Activated CD4-positive, alpha-beta T cell treated with anti-CD3 and anti-CD28 coated beads for 36 hours (primary cell): ENCODE measurements at regions of chr4 and their contacts with region 1.

Region 1: DNA sequence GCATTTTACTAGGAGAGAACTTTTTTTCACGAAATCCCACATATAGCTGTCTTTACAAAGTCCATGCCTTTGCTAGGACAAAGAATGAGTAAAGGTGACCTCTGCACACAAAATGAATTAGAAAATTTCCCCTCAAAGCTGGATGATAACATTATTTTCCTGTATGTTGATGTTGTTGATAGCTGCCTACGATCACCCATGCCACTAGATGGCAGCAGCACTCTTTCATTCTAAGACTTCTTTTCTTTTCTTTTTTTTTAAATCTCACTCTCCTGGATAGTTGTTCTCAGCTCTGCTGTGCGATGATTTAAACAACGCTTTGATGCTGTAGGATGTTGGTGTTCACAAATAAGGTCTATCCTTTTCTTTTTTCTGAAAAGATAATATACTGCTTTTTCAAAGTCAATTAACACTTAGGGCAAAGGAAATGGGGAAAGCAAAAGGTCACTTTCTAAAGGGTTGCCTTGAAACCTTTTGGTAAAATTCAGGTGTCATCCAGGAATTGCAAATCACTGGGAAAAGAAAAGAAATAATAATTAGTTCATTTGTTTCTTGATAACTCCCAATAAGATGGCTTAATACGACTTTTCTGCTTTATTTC is 266.8 kb downstream of the C4orf33 start:
- DNase-seq: peak; percentile 69
- ATAC-seq: peak; percentile 42
- H3K4me3 Mint-ChIP-seq: no peak overlapping the region
- H3K27ac Mint-ChIP-seq: no peak overlapping the region
- H3K4me1 Mint-ChIP-seq: no peaks in the 10 kb centered on the region
- H3K27me3 Mint-ChIP-seq: peaks cover 4% of the 10 kb centered on the region

Region 2: GRCh38 chr4:128782076-128782715 is 580.6 kb before region 1 on chr4:
- CTCF ChIA-PET with region 1: no interaction called
- POLR2A ChIA-PET with region 1: no interaction called
- intact Hi-C with region 1: loop called in 1 of 2 experiments (anchors 5 kb)
- DNase-seq: peak; percentile 59
- ATAC-seq: peak; percentile 65
- H3K4me3 Mint-ChIP-seq: no peak overlapping the region
- H3K27ac Mint-ChIP-seq: no peak overlapping the region
- H3K4me1 Mint-ChIP-seq: no peaks in the 10 kb centered on the region
- H3K27me3 Mint-ChIP-seq: peaks cover 2% of the 10 kb centered on the region

Region 3: DNA sequence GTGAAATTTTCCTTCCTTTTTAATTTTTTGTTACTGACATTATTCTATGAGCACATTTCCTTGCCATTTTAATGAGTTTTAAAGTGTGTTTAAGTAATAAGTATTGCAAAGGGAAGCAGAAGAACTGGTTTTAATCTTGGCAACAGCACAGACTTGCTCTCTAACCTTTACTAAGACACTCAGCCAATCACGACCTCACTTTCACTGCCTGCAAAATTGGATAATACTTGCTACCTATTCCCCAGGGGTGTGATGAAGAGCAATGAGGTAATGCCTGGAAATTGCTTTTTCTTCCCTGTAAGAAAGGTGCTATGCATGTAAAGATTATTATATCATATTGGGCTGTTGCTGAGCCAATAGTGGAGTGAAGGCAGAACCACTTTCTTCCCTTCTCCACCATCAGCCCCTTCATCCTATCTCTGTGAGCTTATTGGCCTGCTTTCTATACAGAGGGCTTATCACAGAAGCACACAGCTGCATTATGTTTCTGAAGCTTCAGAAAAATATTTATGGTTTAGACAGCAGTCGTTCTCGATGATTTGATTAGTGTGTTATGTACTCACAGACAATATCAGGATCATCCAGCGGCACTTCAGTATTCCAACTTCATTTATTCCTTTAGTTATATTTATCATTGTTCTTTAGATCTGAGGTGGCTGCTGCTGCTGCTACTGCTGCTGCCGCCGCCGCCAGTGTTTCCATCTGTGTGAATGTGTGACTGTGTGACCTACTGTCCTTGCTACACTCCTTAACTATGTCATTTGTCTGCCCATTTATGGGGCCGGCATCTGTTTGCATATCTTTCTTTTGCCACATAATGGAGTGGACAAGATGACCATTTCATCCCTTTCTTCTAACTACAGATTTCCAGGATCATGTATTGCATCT is 11.7 kb before region 1 on chr4:
- CTCF ChIA-PET with region 1: interaction called, 12 read pairs
- POLR2A ChIA-PET with region 1: no interaction called
- intact Hi-C with region 1: no loop called
- DNase-seq: no peak
- ATAC-seq: no peak
- H3K4me3 Mint-ChIP-seq: no peak overlapping the region
- H3K27ac Mint-ChIP-seq: no peak overlapping the region
- H3K4me1 Mint-ChIP-seq: no peaks in the 10 kb centered on the region
- H3K27me3 Mint-ChIP-seq: peaks cover 12% of the 10 kb centered on the region